ENCODE measurements at regions of chr18 and their contacts with region 1.

Region 1: DNA sequence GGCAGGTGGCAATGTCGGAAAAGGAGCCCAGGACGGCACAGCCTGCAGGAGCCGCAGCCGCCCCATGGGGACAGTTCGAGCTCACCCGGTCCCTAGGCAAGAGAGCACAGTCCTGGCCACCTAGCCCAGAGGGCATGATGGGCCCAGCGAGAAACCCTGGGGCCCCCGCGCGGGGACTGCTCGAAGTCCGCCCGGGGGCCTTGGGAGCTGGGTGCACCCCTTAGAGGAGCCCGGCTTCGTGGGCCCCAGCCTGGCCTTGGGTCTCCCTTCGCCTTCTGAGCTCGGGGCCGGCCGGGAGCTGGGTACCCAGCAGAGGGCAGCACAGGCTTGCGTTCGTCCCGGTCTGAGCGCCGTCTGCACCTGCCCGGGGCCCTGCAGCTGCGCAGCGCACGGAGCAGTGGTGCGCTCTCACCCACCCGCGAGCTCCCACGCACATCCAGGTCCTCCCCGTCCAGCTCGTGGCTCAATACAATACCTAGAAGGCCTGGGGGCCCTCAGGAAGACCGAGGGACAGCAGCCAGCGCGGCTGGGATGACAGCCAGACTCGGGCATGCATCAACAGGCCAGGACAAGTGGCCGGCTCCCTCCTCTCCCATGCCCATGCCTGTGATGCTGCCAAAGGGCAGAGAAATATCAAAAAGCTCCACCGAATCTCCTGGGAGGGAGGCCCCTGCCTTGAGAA is 96.2 kb upstream of the ZNF532 start:
- DNase-seq: peak; percentile 88
- ATAC-seq: peak; percentile 97
- H3K4me3 Mint-ChIP-seq: peak overlapping the region; percentile 38
- H3K27ac Mint-ChIP-seq: no peak overlapping the region
- H3K4me1 Mint-ChIP-seq: peaks cover 3% of the 10 kb centered on the region
- H3K27me3 Mint-ChIP-seq: peaks cover 34% of the 10 kb centered on the region

Region 2: DNA sequence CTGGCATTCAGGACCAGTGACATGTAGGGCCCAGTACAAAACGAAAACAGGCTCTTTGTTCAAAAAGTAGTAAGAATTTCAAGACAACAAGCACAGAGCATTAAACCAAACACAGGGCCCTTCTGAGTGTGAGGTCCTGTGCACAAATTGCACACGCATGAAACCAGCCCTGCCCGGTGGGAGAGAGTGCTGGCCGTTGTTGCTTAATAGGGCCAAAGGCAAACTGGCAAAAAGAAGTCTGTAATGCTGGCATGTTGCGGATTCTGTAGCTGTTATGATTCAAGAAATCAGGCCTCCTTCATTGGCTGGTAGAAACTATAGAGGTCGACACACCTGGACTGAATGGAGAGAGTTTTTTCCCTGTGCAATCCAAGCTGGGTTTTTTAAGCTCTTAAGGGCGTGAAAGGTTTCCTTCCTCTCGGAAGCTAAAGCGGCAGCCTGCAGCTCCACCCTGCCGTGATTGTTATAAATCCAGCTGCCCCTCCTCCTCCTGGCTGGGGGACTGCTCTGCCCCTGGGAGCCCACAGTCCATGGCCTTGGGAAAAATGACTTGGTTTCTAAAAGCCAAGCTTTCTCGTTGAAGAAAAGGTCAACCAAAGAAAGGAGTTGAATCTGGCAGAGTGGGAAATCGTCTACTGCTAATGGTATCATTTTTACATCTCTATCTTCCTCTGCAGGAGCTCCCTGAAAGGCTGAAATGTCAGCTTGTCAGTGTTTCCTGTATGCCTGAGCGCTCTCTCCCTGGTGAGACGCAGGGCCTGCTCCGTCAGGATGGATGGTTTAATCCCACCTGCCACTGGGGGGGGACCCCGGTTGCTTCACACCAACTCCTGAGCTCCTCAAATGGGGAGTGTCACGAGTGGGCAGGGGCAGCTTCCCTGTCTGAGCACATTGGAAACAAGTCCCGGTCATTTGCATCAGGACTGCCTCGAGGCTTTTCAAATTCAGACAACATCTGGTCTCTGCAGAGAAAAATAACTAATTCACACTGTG is 283.1 kb before region 1 on chr18:
- CTCF ChIA-PET with region 1: interaction called, 13 read pairs
- POLR2A ChIA-PET with region 1: no interaction called
- intact Hi-C with region 1: no loop called
- DNase-seq: no peak
- ATAC-seq: no peak
- H3K4me3 Mint-ChIP-seq: no peak overlapping the region
- H3K27ac Mint-ChIP-seq: no peak overlapping the region
- H3K4me1 Mint-ChIP-seq: peaks cover 8% of the 10 kb centered on the region
- H3K27me3 Mint-ChIP-seq: peaks cover 15% of the 10 kb centered on the region

Region 3: DNA sequence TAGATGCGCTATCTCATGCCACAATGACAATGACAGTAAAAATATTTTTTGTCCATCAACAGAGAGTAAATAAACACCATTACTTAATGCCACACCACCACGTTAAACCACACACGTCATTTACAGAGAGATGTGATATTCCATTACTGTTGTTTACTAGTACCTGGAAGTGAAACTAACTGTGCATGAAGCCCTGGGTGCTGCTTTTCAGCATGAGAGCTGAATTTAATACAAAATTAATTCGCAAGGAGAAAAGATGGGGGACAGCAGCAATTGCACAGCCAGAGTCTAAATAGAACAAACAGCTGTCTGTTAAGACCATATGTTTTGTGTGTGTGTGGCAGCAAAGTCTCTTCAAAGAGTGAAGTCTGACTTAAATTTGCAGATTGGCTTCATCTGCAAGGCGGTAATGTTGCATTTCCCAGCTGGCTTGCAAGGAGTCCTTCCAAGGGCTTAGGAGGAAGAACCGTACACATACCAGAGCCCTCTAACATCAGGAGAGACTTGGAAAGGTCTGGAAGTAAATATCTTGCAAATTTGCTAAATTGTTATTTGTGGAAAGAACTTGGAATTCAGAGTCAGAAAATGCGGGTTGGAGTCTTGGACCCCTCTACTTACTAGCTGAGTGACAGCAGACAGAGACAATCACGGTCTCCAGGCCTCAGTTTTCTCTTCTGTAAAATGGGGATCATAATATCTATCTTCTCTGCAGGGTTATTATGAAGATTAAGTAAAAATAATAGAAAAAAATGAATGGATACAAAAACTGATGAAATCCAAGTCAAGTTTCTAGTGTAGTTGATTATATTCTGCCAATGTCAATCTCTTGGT is 267.2 kb before region 1 on chr18:
- CTCF ChIA-PET with region 1: interaction called, 43 read pairs
- POLR2A ChIA-PET with region 1: no interaction called
- intact Hi-C with region 1: no loop called
- DNase-seq: no peak
- ATAC-seq: no peak
- H3K4me3 Mint-ChIP-seq: no peak overlapping the region
- H3K27ac Mint-ChIP-seq: no peak overlapping the region
- H3K4me1 Mint-ChIP-seq: peaks cover 11% of the 10 kb centered on the region
- H3K27me3 Mint-ChIP-seq: peaks cover 8% of the 10 kb centered on the region

Region 4: GRCh38 chr18:58520969-58521368 is 247.5 kb before region 1 on chr18:
- CTCF ChIA-PET with region 1: interaction called, 298 read pairs
- POLR2A ChIA-PET with region 1: no interaction called
- intact Hi-C with region 1: no loop called
- DNase-seq: peak; percentile 57
- ATAC-seq: peak; percentile 70
- H3K4me3 Mint-ChIP-seq: no peak overlapping the region
- H3K27ac Mint-ChIP-seq: peak overlapping the region; percentile 28
- H3K4me1 Mint-ChIP-seq: peaks cover 22% of the 10 kb centered on the region
- H3K27me3 Mint-ChIP-seq: peaks cover 13% of the 10 kb centered on the region

Region 5: DNA sequence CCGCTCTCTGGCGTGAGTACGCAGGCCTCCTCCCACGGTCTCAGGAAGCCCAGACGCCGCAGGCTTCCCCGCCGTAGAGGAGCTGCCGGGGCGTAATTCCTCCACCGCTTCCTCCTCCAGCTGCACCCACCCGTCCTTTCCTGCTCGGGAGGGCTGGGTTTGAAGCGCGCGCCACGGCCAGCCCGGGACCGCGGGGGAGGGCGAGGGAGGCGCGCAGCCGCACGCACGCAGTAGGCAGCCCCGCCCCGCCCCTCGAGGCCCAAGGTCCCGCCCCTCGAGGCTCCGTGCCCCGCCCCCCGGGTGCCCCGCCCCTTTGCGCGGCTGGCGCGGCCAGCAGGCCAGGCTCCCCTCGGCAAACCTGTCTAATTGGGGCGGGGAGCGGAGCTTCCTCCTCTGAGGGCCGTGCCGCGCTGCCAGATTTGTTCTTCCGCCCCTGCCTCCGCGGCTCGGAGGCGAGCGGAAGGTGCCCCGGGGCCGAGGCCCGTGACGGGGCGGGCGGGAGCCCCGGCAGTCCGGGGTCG is 97.3 kb before region 1 on chr18 and contains the start of gene MALT1:
- CTCF ChIA-PET with region 1: interaction called, 16 read pairs
- POLR2A ChIA-PET with region 1: no interaction called
- intact Hi-C with region 1: loop called (anchors 5 kb)
- DNase-seq: peak; percentile 97
- ATAC-seq: peak; percentile 83
- H3K4me3 Mint-ChIP-seq: peak within 1 kb of the TSS; percentile 98
- H3K27ac Mint-ChIP-seq: peak within 1 kb of the TSS; percentile 96
- H3K4me1 Mint-ChIP-seq: peaks cover 63% of the 10 kb centered on the region
- H3K27me3 Mint-ChIP-seq: no peaks in the 10 kb centered on the region
- total RNA-seq, gene MALT1: 39.3 to 40.5 TPM

Region 6: GRCh38 chr18:58781627-58782194 is 13.3 kb after region 1 on chr18:
- CTCF ChIA-PET with region 1: interaction called, 14 read pairs
- POLR2A ChIA-PET with region 1: no interaction called
- intact Hi-C with region 1: no loop called
- DNase-seq: peak; percentile 82
- ATAC-seq: peak; percentile 94
- H3K4me3 Mint-ChIP-seq: no peak overlapping the region
- H3K27ac Mint-ChIP-seq: no peak overlapping the region
- H3K4me1 Mint-ChIP-seq: no peaks in the 10 kb centered on the region
- H3K27me3 Mint-ChIP-seq: peaks cover 12% of the 10 kb centered on the region

Region 7: DNA sequence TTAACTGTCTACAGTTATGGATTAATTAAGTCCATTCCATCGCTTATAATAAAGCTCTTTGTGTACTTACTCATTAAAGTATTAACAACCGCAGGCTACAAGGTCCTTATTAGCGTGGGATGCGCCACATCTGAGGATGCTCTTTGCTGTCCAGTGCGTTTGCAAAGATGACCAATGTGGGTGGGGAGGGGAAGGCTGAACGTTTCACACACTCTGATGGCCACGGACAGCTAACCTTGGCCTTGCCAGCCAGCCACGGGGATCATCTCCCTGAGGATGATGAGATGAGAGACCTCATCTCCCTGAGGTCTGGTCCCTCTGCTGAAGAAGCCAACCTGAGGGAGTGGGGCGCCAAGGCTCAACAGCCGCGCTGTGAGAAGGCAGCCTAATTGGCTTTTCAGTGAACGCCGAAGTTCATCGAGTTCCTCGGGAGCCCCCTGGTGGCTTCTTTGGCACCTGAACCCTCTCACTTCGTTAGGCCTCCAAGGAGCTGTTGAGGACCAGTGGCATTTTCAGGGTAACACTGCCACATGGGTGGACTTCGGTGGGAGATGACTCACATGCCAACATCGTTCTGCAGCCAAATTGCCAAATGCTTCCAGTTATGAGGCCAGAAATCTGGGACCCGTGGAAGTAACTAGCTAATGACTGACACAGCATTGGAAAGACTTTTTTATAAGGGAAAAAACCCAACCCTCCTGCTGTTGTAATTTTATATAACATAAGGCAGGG is 301.9 kb after region 1 on chr18:
- CTCF ChIA-PET with region 1: interaction called, 36 read pairs
- POLR2A ChIA-PET with region 1: no interaction called
- intact Hi-C with region 1: loop called (anchors 1 kb)
- DNase-seq: peak; percentile 91
- ATAC-seq: peak; percentile 93
- H3K4me3 Mint-ChIP-seq: no peak overlapping the region
- H3K27ac Mint-ChIP-seq: no peak overlapping the region
- H3K4me1 Mint-ChIP-seq: peaks cover 4% of the 10 kb centered on the region
- H3K27me3 Mint-ChIP-seq: no peaks in the 10 kb centered on the region

Measured in activated CD4-positive, alpha-beta T cell treated with anti-CD3 and anti-CD28 coated beads for 36 hours (primary cell).